Endothelial cell of umbilical vein (primary cell): ENCODE measurements at regions of chr9 and their contacts with region 1.

Region 1: GRCh38 chr9:127943731-127944144 is 6.1 kb upstream of the DPM2 start:
- DNase-seq: peak; percentile 71
- H3K4me3 ChIP-seq: no peak overlapping the region
- H3K27ac ChIP-seq: no peak overlapping the region
- H3K4me1 ChIP-seq: no peaks in the 10 kb centered on the region
- H3K27me3 ChIP-seq: no peaks in the 10 kb centered on the region
- CTCF ChIP-seq: peak; percentile 90 to 99
- POLR2A ChIP-seq: no peak

Region 2: DNA sequence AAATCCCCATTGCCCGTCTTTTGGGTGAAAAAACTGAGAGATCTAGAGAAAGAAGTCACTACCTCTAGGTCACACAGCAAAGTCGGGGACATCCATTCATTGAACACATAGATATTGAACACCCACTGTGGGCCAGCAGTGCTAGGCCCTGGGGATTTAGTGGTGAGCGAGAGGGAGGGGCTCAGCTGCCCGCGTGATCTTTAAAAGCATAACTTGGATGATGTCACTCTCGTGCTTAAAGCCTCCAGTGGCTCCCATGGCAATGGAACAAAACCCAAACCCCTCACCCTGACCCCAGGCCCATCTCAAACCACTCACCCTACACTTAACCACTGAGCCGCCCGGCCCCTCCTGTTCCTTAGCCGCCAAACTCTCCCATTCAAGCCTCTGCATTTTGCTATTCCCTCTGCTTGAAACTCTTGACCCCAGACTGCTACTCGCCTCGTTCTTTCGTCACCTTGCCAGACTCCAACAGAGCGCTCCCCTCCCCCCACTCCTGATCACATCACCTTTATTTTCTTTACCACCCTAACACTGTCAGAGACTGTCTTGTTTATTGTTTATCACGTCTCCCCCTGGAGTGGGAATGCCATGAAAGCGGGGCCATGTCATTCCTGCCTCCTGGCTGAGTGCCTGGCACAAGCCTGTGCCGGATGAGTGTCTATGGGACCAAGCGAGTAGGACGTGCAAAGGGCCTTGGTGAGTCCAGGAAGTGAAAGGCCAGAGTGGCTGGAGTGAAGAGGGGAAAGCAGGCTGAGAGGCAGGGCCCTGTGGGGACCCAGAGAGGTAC is 12.5 kb before region 1 on chr9:
- CTCF ChIA-PET with region 1: interaction called, 13 read pairs
- POLR2A ChIA-PET with region 1: no interaction called
- dilution Hi-C with region 1: no loop called
- intact Hi-C with region 1: no loop called
- DNase-seq: peak; percentile 49
- H3K4me3 ChIP-seq: peak overlapping the region; percentile 37 to 54 (median 43)
- H3K27ac ChIP-seq: peak overlapping the region; percentile 67
- H3K4me1 ChIP-seq: peaks cover 23% of the 10 kb centered on the region
- H3K27me3 ChIP-seq: peaks cover 3 to 6% of the 10 kb centered on the region in 2 experiments
- CTCF ChIP-seq: no peak
- POLR2A ChIP-seq: no peak

Region 3: DNA sequence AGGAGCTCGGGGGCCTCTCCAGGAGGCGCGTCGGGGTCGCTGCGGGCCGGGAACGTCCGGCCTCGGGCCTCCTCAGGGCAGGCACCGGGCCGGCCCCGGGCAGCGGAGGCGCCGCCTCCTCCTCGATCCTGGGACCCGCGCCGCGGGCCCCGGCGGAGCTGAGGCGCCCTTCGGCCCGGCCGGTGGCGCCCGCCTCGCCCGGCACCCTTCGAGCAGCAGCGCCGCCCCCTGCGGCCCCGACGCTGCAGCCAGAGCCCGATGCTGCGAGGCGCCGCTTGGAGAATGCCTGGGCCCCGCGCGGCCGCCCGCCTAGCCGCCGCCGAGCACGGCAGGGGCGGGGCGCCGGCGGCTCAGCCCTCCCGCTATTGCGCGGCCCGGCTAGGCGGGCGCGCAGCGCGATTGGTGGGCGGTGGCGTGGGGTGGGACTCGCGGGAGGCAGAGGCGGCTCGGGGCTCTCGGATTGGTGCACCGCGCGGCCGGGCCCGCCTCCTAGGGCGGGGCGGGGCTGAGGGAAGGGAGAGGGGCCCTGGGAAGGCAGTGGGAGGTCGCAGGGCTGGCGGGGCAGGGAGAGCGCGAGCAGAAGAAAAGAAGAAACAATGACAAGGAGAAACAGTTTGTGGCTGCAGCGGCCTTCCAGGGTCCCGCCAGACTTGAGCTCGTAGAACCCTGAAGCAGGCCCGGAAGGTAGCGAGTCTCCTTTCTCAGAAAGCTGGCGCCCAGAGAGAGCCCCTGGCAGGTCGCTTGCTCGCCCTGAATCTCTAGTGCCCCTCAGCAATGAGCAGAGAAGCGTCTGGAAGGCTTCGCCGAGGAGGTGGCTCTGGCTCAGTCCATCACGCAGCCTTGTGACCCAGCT is 37.2 kb after region 1 on chr9 and contains the start of gene EEIG1:
- CTCF ChIA-PET with region 1: interaction called, 71 read pairs
- POLR2A ChIA-PET with region 1: no interaction called
- dilution Hi-C with region 1: no loop called
- intact Hi-C with region 1: loop called (anchors 2 kb)
- DNase-seq: peak; percentile 94
- H3K4me3 ChIP-seq: peak within 1 kb of the TSS; percentile 26 to 61 (median 61)
- H3K27ac ChIP-seq: peak within 1 kb of the TSS; percentile 54
- H3K4me1 ChIP-seq: peaks cover 22% of the 10 kb centered on the region
- H3K27me3 ChIP-seq: no peaks in the 10 kb centered on the region
- CTCF ChIP-seq: no peak
- POLR2A ChIP-seq: peak; percentile 79
- total RNA-seq, gene EEIG1: 16.4 and 19.0 TPM in 2 replicates

Region 4: DNA sequence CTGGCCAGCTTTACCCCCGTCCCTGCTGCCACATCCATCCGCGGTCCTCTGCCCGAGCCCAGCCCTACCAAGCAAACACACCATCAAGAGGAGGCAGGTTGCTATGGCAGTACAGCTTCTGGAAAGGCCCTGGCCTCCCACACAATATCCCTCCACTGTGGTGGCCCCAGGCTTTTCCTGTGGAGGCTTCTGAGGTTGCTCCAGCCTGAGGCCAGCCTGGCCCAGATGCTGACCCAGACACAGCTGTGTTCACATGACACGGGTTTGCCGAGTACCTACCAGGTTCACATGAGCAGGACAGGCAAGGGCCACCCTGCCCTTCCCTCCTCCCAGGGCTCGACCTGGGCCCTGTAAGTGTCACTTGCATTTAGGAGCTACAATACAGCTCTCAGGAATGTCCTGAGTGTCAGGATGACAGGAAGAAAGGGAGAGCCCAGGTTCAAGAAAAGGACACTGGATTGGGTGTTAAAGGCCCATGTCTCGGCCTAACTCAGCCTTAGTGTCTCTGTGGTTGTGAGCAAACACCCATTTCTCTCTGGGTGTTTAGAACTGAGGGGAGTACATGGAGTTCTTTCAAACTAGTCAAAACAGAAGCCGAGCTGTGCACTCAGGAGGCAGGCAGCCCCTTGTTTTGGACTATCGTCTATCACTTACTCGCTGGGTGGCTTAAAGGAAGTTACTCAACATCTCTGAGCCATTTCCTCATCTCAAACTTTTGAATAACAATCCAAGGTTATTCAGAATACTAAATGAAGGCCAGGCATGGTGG is 83.2 kb after region 1 on chr9:
- CTCF ChIA-PET with region 1: interaction called, 35 read pairs
- POLR2A ChIA-PET with region 1: no interaction called
- dilution Hi-C with region 1: no loop called
- intact Hi-C with region 1: loop called (anchors 2 kb)
- DNase-seq: peak; percentile 32
- H3K4me3 ChIP-seq: no peak overlapping the region
- H3K27ac ChIP-seq: peak overlapping the region; percentile 13
- H3K4me1 ChIP-seq: peaks cover 13% of the 10 kb centered on the region
- H3K27me3 ChIP-seq: no peaks in the 10 kb centered on the region
- CTCF ChIP-seq: no peak
- POLR2A ChIP-seq: no peak

Region 5: DNA sequence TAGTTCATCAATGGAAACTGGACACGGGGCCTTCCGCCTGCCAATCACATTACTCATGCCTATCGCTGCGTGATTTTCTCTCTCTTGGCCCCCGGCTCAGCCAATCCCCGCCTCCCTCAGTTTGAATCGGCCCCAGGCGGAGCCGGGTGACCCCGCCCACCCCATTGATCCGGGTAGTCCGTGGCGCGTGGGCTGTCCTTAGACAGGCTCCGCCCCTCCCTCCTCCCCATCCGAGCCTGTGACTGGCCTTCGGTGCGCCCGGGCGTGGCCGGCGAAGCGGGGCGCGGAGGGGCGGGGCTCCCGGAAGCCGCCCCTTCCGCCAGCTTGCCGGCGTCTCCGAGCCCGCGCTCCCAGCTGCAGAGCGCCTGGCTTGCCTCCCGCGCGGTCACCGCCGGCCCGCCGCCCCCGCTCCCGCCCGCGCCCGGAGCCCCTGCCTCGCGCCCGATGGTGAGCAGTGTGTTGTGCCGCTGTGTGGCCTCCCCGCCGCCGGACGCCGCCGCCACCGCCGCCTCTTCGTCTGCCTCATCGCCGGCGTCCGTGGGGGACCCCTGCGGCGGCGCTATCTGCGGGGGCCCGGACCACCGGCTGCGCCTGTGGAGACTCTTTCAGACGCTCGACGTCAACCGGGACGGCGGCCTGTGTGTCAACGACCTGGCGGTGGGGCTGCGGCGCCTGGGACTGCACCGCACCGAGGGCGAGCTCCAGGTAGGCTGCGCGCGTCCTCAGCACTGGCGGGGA is 124.3 kb after region 1 on chr9 and contains the start of gene SLC25A25:
- CTCF ChIA-PET with region 1: interaction called, 10 read pairs
- POLR2A ChIA-PET with region 1: interaction called, 8 read pairs
- dilution Hi-C with region 1: no loop called
- intact Hi-C with region 1: no loop called
- DNase-seq: peak; percentile 100
- H3K4me3 ChIP-seq: peak within 1 kb of the TSS; percentile 30 to 79 (median 75)
- H3K27ac ChIP-seq: peak within 1 kb of the TSS; percentile 96
- H3K4me1 ChIP-seq: peaks cover 25% of the 10 kb centered on the region
- H3K27me3 ChIP-seq: no peaks in the 10 kb centered on the region
- CTCF ChIP-seq: no peak
- POLR2A ChIP-seq: peak; percentile 61
- total RNA-seq, gene SLC25A25: 20.1 and 20.2 TPM in 2 replicates

Region 6: GRCh38 chr9:128117613-128118471 is 174.1 kb after region 1 on chr9:
- CTCF ChIA-PET with region 1: interaction called, 32 read pairs
- POLR2A ChIA-PET with region 1: no interaction called
- dilution Hi-C with region 1: no loop called
- intact Hi-C with region 1: loop called (anchors 1 kb)
- DNase-seq: peak; percentile 93
- H3K4me3 ChIP-seq: no peak overlapping the region
- H3K27ac ChIP-seq: no peak overlapping the region
- H3K4me1 ChIP-seq: no peaks in the 10 kb centered on the region
- H3K27me3 ChIP-seq: no peaks in the 10 kb centered on the region
- CTCF ChIP-seq: peak; percentile 100
- POLR2A ChIP-seq: no peak

Region 7: DNA sequence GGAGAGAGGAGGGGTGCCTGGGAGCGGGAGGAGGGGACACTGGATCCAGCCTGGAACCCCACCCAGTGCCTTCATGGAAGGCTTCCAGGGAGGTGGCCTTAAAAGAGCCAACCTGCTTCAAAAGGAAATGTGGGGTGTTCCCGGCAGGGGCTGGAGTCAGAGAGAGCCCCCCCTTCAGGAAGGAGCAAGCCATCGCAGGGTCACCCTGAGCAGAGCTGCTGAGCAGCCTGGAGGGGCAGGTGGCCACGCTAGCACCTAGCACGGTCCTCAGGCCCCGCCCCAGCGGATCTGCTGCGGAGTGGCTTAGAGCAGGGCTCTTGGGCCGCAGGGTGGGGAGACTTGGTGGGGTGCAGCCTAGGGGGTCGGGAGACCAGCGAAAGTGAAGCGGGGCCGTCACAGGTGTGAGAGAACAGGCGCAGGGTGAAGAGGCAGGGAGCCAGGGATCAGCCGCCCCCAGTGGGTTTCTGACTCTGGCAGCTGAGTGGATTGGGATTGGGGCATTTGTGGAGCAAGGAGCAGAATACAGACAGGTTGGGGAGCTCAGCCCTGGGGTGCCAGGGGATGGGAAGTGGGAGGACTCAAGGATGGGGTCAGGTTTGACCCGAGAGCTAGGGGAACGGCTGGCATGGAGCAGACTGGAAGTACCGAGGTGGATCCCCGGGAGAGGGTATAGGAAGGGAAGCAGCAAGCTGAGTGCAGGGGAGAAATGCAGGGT is 207.0 kb after region 1 on chr9:
- CTCF ChIA-PET with region 1: no interaction called
- POLR2A ChIA-PET with region 1: no interaction called
- dilution Hi-C with region 1: no loop called
- intact Hi-C with region 1: no loop called
- DNase-seq: no peak
- H3K4me3 ChIP-seq: no peak overlapping the region
- H3K27ac ChIP-seq: no peak overlapping the region
- H3K4me1 ChIP-seq: no peaks in the 10 kb centered on the region
- H3K27me3 ChIP-seq: no peaks in the 10 kb centered on the region
- CTCF ChIP-seq: peak; percentile 22 to 38
- POLR2A ChIP-seq: no peak